ENCODE measurements at regions of chr7 and their contacts with region 1.

Region 1: DNA sequence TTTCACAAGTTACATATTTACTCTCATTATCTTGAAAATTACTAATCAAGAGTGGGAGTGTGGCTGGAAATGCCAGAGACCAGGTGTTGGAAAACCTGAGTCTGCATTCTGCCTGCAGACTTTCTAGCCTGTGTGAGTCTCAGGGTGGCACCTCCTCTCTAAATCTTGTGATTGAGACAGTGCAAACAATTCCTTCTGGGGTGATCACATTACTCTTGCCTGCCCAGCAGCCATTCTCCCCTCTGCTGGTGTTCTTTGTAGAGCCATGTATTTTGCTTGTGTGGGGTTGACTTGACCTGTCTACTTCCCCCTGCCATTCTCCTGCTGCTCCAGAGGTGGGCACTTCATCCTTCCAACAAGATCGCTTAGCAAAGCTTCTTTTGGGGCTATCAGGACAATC is 101.1 kb downstream of the RAPGEF5 start:
- DNase-seq: no peak
- ATAC-seq: peak in 1 of 8 donors; percentile 17
- H3K4me3 ChIP-seq: no peak overlapping the region
- H3K27ac ChIP-seq: no peak overlapping the region
- H3K4me1 ChIP-seq: peaks cover 0 to 27% (median 0%) of the 10 kb centered on the region in 9 donors
- H3K27me3 ChIP-seq: no peaks in the 10 kb centered on the region
- CTCF ChIP-seq: no peak

Region 2: GRCh38 chr7:22110227-22110839 is 145.5 kb before region 1 on chr7:
- intact Hi-C with region 1: loop called in 4 of 10 experiments (anchors 2 to 10 kb)
- DNase-seq: peak in 1 of 2 donors; percentile 77
- ATAC-seq: peak; percentile 51 to 83 (median 74)
- H3K4me3 ChIP-seq: no peak overlapping the region
- H3K27ac ChIP-seq: peak overlapping the region in 2 of 10 donors; percentile 10 to 23
- H3K4me1 ChIP-seq: peaks cover 0 to 25% (median 8%) of the 10 kb centered on the region in 9 donors
- H3K27me3 ChIP-seq: peaks cover 0 to 7% (median 0%) of the 10 kb centered on the region in 7 donors
- CTCF ChIP-seq: peak; percentile 72 to 89 (median 81)

Region 3: GRCh38 chr7:22137466-22137865 is 118.4 kb before region 1 on chr7:
- intact Hi-C with region 1: loop called in 1 of 10 experiments (anchors 10 kb)
- DNase-seq: no peak
- ATAC-seq: no peak
- H3K4me3 ChIP-seq: no peak overlapping the region
- H3K27ac ChIP-seq: peak overlapping the region in 1 of 10 donors; percentile 13
- H3K4me1 ChIP-seq: no peaks in the 10 kb centered on the region
- H3K27me3 ChIP-seq: no peaks in the 10 kb centered on the region
- CTCF ChIP-seq: no peak

Region 4: GRCh38 chr7:22219036-22219435 is 36.8 kb before region 1 on chr7:
- intact Hi-C with region 1: loop called in 2 of 10 experiments (anchors 5 kb)
- DNase-seq: no peak
- ATAC-seq: peak in 7 of 8 donors; percentile 41 to 65 (median 57)
- H3K4me3 ChIP-seq: peak overlapping the region; percentile 12 to 67 (median 47)
- H3K27ac ChIP-seq: peak overlapping the region; percentile 52 to 89 (median 82)
- H3K4me1 ChIP-seq: peaks cover 0 to 56% (median 8%) of the 10 kb centered on the region in 9 donors
- H3K27me3 ChIP-seq: no peaks in the 10 kb centered on the region
- CTCF ChIP-seq: no peak

Region 5: DNA sequence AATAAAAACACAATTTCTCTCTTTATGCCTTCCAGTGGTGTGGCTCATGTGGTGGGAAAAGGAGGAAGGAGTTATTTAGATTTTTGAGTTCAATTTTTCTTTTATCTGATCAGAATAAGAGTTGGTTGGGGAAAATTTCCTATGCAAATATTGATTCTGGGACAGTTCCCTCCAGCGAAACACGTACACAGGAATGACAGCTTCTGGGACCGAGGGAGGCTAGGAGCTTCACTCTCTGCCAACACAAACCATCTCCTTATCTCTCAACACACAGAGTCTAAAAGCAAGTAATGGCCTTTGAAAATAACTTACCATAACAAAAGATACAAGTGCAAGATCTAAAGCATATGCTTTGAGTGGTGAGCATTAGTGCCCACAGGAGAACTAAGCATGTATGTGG is 21.6 kb before region 1 on chr7:
- intact Hi-C with region 1: no loop called
- DNase-seq: no peak
- ATAC-seq: peak in 4 of 8 donors; percentile 26 to 70 (median 63)
- H3K4me3 ChIP-seq: no peak overlapping the region
- H3K27ac ChIP-seq: no peak overlapping the region
- H3K4me1 ChIP-seq: peaks cover 0 to 6% (median 0%) of the 10 kb centered on the region in 9 donors
- H3K27me3 ChIP-seq: no peaks in the 10 kb centered on the region
- CTCF ChIP-seq: no peak

Region 6: DNA sequence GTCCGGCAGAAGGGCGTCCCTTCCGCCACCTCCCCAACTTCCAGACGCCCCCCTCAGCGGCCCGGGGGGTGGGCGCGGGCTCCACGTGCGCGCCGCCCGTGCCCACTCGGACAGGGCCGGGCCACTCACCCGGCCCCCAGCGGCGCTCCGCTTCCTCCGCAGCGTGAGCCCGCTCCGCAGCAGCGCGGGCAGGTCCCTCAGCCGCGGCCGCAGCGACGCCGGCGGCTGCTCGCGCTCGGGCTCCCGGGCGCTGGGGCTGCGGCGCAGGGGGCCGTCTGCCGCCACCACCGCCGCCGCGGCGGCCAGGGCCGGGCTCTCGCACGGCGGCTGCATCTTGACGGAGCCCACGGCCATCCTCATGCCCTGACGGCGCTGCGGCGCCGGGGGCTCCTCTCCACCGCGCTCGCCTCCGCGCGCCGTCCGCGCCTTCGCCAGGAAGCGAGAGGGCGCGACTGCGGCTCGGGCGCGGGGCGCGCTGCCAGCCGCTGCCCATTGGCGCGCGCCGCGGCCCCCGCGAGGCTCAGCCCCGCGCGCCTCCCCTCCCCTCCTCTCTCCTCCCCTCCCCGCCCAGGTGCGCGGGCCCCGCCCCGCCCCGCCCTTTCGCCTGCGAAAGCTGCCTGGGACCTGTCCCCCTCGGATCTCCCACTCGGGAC is 101.0 kb after region 1 on chr7 and contains the start of gene RAPGEF5:
- intact Hi-C with region 1: no loop called
- DNase-seq: peak in 1 of 2 donors; percentile 14
- ATAC-seq: peak in 7 of 8 donors; percentile 17 to 58 (median 35)
- H3K4me3 ChIP-seq: peak within 1 kb of the TSS; percentile 21 to 63 (median 50)
- H3K27ac ChIP-seq: peak within 1 kb of the TSS in 6 of 10 donors; percentile 23 to 59 (median 32)
- H3K4me1 ChIP-seq: peaks cover 0 to 22% (median 8%) of the 10 kb centered on the region in 9 donors
- H3K27me3 ChIP-seq: peaks cover 0 to 41% (median 19%) of the 10 kb centered on the region in 7 donors
- CTCF ChIP-seq: peak in 2 of 9 donors; percentile 5 to 9
- total RNA-seq, gene RAPGEF5: 9.2 to 33.3 (median 15.3) TPM